ENCODE measurements at regions of chr12 and their contacts with region 1.

Region 1: GRCh38 chr12:109428037-109428629 is 49.0 kb downstream of the KCTD10 start:
- DNase-seq: peak; percentile 92
- H3K4me3 Mint-ChIP-seq: no peak overlapping the region
- H3K27ac Mint-ChIP-seq: no peak overlapping the region
- H3K4me1 Mint-ChIP-seq: peaks cover 5% of the 10 kb centered on the region
- H3K27me3 Mint-ChIP-seq: peaks cover 3% of the 10 kb centered on the region

Region 2: GRCh38 chr12:109131154-109132050 is 296.7 kb before region 1 on chr12:
- intact Hi-C with region 1: no loop called
- DNase-seq: no peak
- H3K4me3 Mint-ChIP-seq: no peak overlapping the region
- H3K27ac Mint-ChIP-seq: no peak overlapping the region
- H3K4me1 Mint-ChIP-seq: no peaks in the 10 kb centered on the region
- H3K27me3 Mint-ChIP-seq: peaks cover 4% of the 10 kb centered on the region

Region 3: GRCh38 chr12:109440851-109441493 is 12.8 kb after region 1 on chr12:
- intact Hi-C with region 1: no loop called
- DNase-seq: no peak
- H3K4me3 Mint-ChIP-seq: no peak overlapping the region
- H3K27ac Mint-ChIP-seq: no peak overlapping the region
- H3K4me1 Mint-ChIP-seq: no peaks in the 10 kb centered on the region
- H3K27me3 Mint-ChIP-seq: no peaks in the 10 kb centered on the region

Region 4: DNA sequence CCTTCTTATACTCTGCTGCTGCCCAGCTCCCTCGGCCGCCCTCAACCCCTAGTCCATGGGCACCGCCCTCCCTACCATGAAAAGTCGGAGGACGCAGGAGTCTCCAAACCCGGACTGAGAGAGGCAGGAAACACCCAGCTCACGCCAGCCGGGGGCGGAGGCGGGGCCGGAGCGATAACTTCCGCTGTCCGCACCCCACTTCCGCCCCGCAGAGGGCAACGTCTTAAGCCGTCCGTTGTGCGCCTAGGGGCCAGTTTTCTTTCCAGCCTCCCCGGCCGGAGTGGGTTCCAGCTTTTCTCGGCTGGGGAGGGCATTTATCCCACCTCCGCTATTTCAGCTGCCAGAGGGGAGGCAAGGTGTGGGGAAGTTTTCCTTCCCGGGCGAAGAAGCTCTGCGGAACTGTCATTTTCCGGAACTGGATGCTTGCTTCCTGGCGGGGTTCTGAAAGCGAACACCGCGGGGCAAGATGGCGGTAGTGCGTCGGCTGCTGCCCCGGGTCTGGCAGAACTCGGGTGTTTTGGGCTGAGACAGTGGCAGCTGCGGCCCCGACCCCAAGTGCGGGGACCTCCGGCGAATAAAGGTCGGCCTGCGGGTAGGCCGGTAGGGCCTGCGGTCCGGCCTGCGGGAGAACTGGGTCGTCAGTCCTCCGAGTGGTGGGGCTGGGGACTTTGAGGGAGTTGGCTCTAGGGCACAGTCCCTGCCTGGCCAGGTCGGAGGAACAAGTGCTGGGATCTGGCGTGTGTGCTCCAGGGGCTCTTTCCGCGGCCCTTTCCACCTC is 49.2 kb after region 1 on chr12 and contains the starts of genes KCTD10 and UBE3B:
- intact Hi-C with region 1: loop called (anchors 5 kb)
- DNase-seq: peak; percentile 97
- H3K4me3 Mint-ChIP-seq: peak within 1 kb of the TSS; percentile 94
- H3K27ac Mint-ChIP-seq: peak within 1 kb of the TSS; percentile 99
- H3K4me1 Mint-ChIP-seq: peaks cover 30% of the 10 kb centered on the region
- H3K27me3 Mint-ChIP-seq: peaks cover 2% of the 10 kb centered on the region
- total RNA-seq, gene KCTD10: 47.5 and 48.5 TPM in 2 replicates
- total RNA-seq, gene UBE3B: 28.9 and 32.2 TPM in 2 replicates

Region 5: GRCh38 chr12:109775172-109775881 is 347.2 kb after region 1 on chr12:
- intact Hi-C with region 1: loop called (anchors 1 kb)
- DNase-seq: peak; percentile 91
- H3K4me3 Mint-ChIP-seq: no peak overlapping the region
- H3K27ac Mint-ChIP-seq: no peak overlapping the region
- H3K4me1 Mint-ChIP-seq: peaks cover 4% of the 10 kb centered on the region
- H3K27me3 Mint-ChIP-seq: no peaks in the 10 kb centered on the region

Region 6: DNA sequence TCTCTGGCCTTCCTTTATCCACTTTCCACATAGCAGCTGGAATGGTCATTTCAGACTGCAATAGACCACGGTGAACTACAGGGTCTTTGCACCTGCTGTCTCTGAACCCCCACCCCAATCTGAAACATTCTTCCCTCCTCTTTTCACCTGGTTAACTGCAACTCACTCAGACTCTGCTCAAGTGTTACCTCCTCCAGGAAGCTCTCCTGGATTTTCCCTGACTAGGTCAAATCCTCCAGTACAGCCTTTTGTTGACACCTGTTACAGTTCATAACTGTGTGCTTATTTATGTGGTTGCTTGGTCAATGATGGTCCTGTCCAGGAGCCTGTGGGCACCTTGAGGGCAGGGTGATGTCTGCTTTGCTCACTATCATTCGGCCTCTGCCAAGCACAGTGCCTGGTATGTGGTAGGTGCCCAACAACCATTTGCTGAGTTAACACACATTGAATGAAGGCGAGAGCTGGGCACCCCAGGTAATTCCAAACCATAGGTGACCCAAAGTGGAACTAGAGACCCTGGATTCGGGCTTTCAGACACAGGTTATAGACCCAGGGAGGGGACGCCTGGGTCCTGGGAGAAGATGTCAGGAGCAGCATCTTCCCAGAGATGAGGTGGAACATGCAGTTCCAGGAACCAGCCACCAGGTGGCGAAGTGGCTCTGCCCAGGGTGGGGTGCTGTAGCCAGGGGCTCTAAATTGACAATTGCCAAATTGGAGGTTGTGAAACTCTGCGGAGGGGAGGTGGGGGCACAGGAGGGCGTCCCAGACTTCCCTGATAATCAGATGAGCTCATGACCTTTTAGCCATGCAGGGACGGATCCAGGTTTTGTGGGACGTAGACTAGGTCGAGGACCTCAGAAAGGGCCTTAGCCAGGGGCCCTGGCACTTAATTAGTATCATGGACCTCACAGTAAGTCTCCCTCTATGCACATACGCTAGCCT is 377.0 kb after region 1 on chr12:
- intact Hi-C with region 1: no loop called
- DNase-seq: peak; percentile 90
- H3K4me3 Mint-ChIP-seq: no peak overlapping the region
- H3K27ac Mint-ChIP-seq: no peak overlapping the region
- H3K4me1 Mint-ChIP-seq: peaks cover 2% of the 10 kb centered on the region
- H3K27me3 Mint-ChIP-seq: no peaks in the 10 kb centered on the region

Region 7: GRCh38 chr12:109844983-109845823 is 417.1 kb after region 1 on chr12:
- intact Hi-C with region 1: loop called (anchors 1 kb)
- DNase-seq: peak; percentile 98
- H3K4me3 Mint-ChIP-seq: peak overlapping the region; percentile 68
- H3K27ac Mint-ChIP-seq: peak overlapping the region; percentile 70
- H3K4me1 Mint-ChIP-seq: peaks cover 3% of the 10 kb centered on the region
- H3K27me3 Mint-ChIP-seq: peaks cover under 1% of the 10 kb centered on the region

Measured in activated CD4-positive, alpha-beta T cell treated with anti-CD3 and anti-CD28 coated beads, Interleukin-2, amount 10 ng/mL, durations not matched to agents 24 days and 14 days (primary cell).